ENCODE measurements at regions of chr20 and their contacts with region 1.

Region 1: GRCh38 chr20:7285918-7286556 is 518.6 kb downstream of the BMP2 start:
- DNase-seq: peak in 1 of 2 experiments; percentile 77
- H3K4me3 ChIP-seq: no peak overlapping the region
- H3K27ac ChIP-seq: no peak overlapping the region
- H3K4me1 ChIP-seq: no peaks in the 10 kb centered on the region
- H3K27me3 ChIP-seq: no peaks in the 10 kb centered on the region
- CTCF ChIP-seq: peak; percentile 48 to 83 (median 67)
- EP300 ChIP-seq: no peak
- POLR2A ChIP-seq: no peak
- RAD21 ChIP-seq: peak; percentile 73 to 79

Region 2: GRCh38 chr20:7272512-7272911 is 13.5 kb before region 1 on chr20:
- CTCF ChIA-PET with region 1: interaction called, 16 read pairs
- POLR2A ChIA-PET with region 1: no interaction called
- DNase-seq: no peak
- H3K4me3 ChIP-seq: no peak overlapping the region
- H3K27ac ChIP-seq: no peak overlapping the region
- H3K4me1 ChIP-seq: peaks cover 0 to 3% (median 0%) of the 10 kb centered on the region in 4 experiments; a peak in 1 of 7 replicates
- H3K27me3 ChIP-seq: no peaks in the 10 kb centered on the region
- CTCF ChIP-seq: peak in 2 of 3 experiments; percentile 53 to 59; a peak in 2 of 4 replicates
- EP300 ChIP-seq: no peak
- POLR2A ChIP-seq: no peak
- RAD21 ChIP-seq: peak; percentile 84 to 85

Region 3: DNA sequence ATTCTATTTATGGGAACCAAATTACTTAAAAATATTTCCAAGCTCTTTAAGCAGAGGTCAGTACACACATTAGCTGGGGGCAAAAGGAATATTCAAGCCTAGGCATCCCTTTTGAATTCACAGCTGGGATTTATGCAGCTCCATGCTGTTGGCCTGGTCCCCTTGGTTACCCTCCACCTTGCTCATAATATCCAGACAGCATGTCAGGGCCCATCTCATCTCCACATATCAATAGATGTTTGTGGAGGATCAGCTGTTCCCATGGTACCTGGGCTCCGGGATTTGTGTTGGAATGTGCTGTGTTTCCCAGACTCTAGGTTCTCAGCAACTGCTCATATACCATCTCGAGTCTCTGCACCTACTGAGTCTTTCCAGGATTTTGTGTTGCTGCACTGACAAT is 16.2 kb after region 1 on chr20:
- CTCF ChIA-PET with region 1: interaction called, 12 read pairs
- POLR2A ChIA-PET with region 1: no interaction called
- DNase-seq: no peak
- H3K4me3 ChIP-seq: no peak overlapping the region
- H3K27ac ChIP-seq: no peak overlapping the region
- H3K4me1 ChIP-seq: peaks cover 0 to 4% (median 0%) of the 10 kb centered on the region in 4 experiments; a peak in 1 of 7 replicates
- H3K27me3 ChIP-seq: no peaks in the 10 kb centered on the region
- CTCF ChIP-seq: no peak
- EP300 ChIP-seq: no peak
- POLR2A ChIP-seq: no peak
- RAD21 ChIP-seq: no peak

Region 4: GRCh38 chr20:7449269-7449668 is 163.2 kb after region 1 on chr20:
- CTCF ChIA-PET with region 1: no interaction called
- POLR2A ChIA-PET with region 1: no interaction called
- DNase-seq: no peak
- H3K4me3 ChIP-seq: no peak overlapping the region
- H3K27ac ChIP-seq: no peak overlapping the region
- H3K4me1 ChIP-seq: no peaks in the 10 kb centered on the region
- H3K27me3 ChIP-seq: no peaks in the 10 kb centered on the region
- CTCF ChIP-seq: no peak
- EP300 ChIP-seq: no peak
- POLR2A ChIP-seq: no peak
- RAD21 ChIP-seq: no peak